ENCODE measurements at regions of chr6 and their contacts with region 1.

Region 1: GRCh38 chr6:166956444-166957086 is at the start of gene RNASET2:
- DNase-seq: peak; percentile 93
- H3K4me3 ChIP-seq: peak within 1 kb of the TSS; percentile 79
- H3K27ac ChIP-seq: peak within 1 kb of the TSS; percentile 87
- H3K4me1 ChIP-seq: peaks cover 74% of the 10 kb centered on the region
- CTCF ChIP-seq: no peak
- total RNA-seq, gene RNASET2: 71.7 and 87.1 TPM in 2 replicates

Region 2: DNA sequence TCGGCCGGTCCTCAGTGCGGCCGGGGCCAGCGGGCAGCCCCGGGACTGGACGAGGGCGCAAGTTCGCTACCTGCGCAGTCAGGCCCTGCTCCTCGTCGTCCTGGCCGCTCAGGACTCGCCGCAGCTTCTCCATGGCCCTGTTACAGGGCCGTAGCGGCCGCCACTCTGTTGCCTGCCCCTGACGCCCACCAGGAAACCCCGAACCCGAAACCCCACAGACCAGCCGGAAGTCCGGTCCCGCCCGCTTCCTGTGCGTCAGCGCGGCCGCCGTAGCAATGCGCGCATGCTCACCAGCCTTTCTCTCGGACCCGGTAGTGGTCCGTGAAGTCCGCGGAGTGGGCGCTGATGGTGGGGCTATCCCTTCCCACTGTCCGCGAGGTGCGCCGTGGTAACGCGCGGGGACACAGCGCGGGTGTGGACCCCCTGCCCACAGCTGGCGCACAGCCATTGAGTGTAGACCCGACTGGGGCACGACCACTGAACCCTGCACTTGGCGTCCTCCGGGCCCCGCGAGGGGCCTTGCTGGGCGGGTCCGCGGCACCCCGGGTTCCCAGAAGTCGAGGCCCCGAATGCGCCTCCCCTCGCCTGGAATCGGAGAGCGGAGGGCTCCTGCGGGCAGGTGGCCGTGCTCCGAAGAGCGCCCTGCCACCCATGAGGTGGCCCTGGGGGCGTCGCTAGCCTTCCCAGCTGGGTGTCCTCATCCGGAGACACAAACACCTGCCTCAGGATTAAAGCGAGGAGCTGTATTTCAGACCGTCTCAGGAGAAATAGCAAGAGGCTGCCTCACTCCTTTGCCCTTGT is 614.0 kb before region 1 on chr6 and contains the start of gene SFT2D1:
- CTCF ChIA-PET with region 1: no interaction called
- POLR2A ChIA-PET with region 1: no interaction called
- intact Hi-C with region 1: loop called (anchors 10 kb)
- DNase-seq: peak; percentile 90
- H3K4me3 ChIP-seq: peak within 1 kb of the TSS; percentile 97
- H3K27ac ChIP-seq: peak within 1 kb of the TSS; percentile 65
- H3K4me1 ChIP-seq: peaks cover 25% of the 10 kb centered on the region
- CTCF ChIP-seq: no peak
- total RNA-seq, gene SFT2D1: 40.2 and 43.4 TPM in 2 replicates

Region 3: GRCh38 chr6:166586424-166587156 is 370.0 kb before region 1 on chr6 and contains the start of gene RAMACL:
- CTCF ChIA-PET with region 1: no interaction called
- POLR2A ChIA-PET with region 1: no interaction called
- intact Hi-C with region 1: loop called (anchors 1 kb)
- DNase-seq: peak; percentile 88
- H3K4me3 ChIP-seq: no peak within 1 kb of the TSS
- H3K27ac ChIP-seq: peak within 1 kb of the TSS; percentile 93
- H3K4me1 ChIP-seq: peaks cover 35% of the 10 kb centered on the region
- CTCF ChIP-seq: no peak
- total RNA-seq, gene RAMACL: 0.41 TPM in 1 of 2 replicates, not detected in the other

Region 4: GRCh38 chr6:166825553-166826145 is 130.9 kb before region 1 on chr6:
- CTCF ChIA-PET with region 1: no interaction called
- POLR2A ChIA-PET with region 1: no interaction called
- intact Hi-C with region 1: no loop called
- DNase-seq: no peak
- H3K4me3 ChIP-seq: no peak overlapping the region
- H3K27ac ChIP-seq: no peak overlapping the region
- H3K4me1 ChIP-seq: no peaks in the 10 kb centered on the region
- CTCF ChIP-seq: no peak

Region 5: DNA sequence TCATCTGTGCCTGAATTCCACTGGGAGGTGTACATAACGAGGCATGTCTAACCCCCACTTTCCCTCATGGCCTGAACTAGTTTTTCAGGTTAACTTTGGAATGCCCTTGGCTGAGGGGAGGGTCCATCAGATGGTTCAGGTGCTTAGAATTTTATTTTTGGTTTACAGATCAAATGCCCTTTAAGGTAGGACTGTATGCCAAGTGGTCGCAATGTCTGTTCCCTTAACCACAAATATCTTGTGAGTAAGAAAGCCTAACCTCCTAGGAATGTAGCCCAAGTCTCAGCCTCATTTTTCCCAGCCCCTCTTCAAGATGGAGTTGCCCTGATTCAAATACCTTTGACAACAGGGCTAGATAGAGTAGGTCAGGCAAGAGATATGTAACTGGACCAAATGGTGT is 78.7 kb before region 1 on chr6:
- CTCF ChIA-PET with region 1: no interaction called
- POLR2A ChIA-PET with region 1: no interaction called
- intact Hi-C with region 1: no loop called
- DNase-seq: no peak
- H3K4me3 ChIP-seq: no peak overlapping the region
- H3K27ac ChIP-seq: no peak overlapping the region
- H3K4me1 ChIP-seq: no peaks in the 10 kb centered on the region
- CTCF ChIP-seq: no peak

Region 6: GRCh38 chr6:166999145-166999883 is 42.7 kb after region 1 on chr6 and contains the start of gene CEP43:
- CTCF ChIA-PET with region 1: no interaction called
- POLR2A ChIA-PET with region 1: interaction called, 4 read pairs
- intact Hi-C with region 1: loop called (anchors 2 kb)
- DNase-seq: peak; percentile 96
- H3K4me3 ChIP-seq: peak within 1 kb of the TSS; percentile 95
- H3K27ac ChIP-seq: peak within 1 kb of the TSS; percentile 65
- H3K4me1 ChIP-seq: peaks cover 33% of the 10 kb centered on the region
- CTCF ChIP-seq: 0 out of 2 replicates have a peak, but pooled peaks have one; percentile 1
- total RNA-seq, gene CEP43: 41.2 and 48.1 TPM in 2 replicates

Region 7: GRCh38 chr6:167119670-167120381 is 163.3 kb after region 1 on chr6:
- CTCF ChIA-PET with region 1: interaction called, 3 read pairs
- POLR2A ChIA-PET with region 1: interaction called, 20 read pairs
- intact Hi-C with region 1: loop called (anchors 2 kb)
- DNase-seq: peak; percentile 69
- H3K4me3 ChIP-seq: no peak overlapping the region
- H3K27ac ChIP-seq: peak overlapping the region; percentile 7
- H3K4me1 ChIP-seq: peaks cover 89% of the 10 kb centered on the region
- CTCF ChIP-seq: peak; percentile 80

Region 8: DNA sequence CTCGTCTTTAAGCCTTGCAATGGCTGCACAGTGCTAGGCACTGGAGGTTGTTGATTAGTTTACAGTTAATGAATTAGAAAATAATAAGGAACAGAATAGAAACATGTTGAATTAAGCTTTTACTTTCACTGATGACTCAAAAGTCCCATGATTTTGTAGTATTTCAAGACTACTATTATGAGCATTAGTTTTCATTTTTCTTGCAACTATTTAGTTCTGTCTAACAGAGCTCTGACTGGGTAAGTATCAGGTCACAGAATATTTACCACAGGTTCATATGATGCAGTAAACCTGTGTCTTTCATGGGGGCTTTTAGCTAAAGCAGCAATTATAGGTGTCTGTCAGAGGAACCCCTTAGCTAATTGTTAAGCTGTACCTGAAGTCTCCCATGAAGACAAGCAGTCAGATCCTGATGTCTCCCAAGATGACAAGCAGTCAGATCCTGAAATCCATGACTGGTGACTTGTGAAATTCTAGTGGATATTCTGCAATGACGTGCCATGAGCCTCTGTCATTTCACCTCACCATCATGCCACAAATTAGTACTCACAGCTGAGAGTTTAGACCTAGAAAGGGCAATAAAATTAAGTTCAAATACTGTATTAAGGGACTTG is 209.4 kb after region 1 on chr6:
- CTCF ChIA-PET with region 1: interaction called, 22 read pairs
- POLR2A ChIA-PET with region 1: no interaction called
- intact Hi-C with region 1: no loop called
- DNase-seq: no peak
- H3K4me3 ChIP-seq: no peak overlapping the region
- H3K27ac ChIP-seq: no peak overlapping the region
- H3K4me1 ChIP-seq: no peaks in the 10 kb centered on the region
- CTCF ChIP-seq: no peak

Measured in OCI-LY7 (cell line).